ENCODE measurements at regions of chr2 and their contacts with region 1.

Region 1: DNA sequence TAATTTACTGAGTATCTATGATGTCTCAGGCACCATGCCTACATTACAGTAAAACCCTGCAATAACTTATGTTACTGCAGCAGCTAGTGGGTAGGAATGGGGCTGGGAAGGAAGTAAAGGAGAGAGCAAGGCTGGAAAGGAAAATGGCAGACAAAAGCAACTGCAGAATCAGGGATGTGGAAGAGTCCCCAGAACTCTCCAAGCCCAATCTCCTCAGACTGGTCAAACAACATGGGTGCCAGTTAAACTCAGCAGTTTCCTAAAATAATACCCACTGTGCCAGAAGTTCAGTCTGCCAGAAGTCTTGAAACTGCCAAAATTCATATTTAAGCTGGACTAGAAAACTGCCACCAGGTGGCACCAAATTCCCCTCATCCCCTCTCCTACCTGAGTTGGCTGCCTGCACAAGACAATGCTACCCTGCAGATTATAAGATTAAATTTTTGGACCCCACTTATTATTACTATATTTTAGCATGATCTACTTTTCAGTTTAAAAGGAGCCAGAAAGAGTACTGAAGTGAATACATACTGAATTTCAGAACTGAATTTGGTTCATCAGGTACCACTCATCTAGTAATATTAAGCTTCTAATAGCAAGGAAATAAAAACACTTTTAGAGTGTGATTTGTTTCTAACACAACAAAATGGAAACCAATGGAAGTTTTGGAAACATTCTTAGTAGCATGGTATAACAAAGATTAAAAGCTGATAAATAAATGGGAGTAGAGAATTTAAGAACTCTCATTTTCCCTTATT is 86.8 kb upstream of the DNER start:
- DNase-seq: peak; percentile 66
- H3K4me3 ChIP-seq: no peak overlapping the region
- H3K27ac ChIP-seq: no peak overlapping the region
- H3K4me1 ChIP-seq: no peaks in the 10 kb centered on the region
- H3K27me3 ChIP-seq: no peaks in the 10 kb centered on the region
- CTCF ChIP-seq: peak; percentile 42 to 71 (median 63)
- EP300 ChIP-seq: no peak
- POLR2A ChIP-seq: no peak

Region 2: DNA sequence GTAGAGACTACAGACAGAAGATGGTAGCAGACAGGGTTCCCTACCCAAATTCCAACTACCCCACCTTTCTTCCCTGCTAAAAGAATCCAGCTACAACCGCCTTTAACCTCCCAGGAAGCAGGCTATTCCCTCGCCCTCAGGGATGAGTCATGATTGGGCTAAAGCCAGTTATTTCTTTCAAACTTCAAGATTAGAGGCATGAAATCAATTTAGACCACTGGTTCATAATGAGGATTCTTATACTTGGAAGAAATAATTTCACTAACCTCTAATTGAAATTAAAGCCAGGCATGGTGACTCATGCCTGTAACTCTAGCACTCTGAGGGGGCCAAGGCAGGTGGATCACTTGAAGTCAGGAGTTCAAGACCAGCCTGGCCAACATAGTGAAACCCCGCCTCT is 100.6 kb after region 1 on chr2:
- in situ Hi-C with region 1: loop called in 1 of 4 experiments (anchors 10 kb)
- intact Hi-C with region 1: no loop called
- DNase-seq: no peak
- H3K4me3 ChIP-seq: no peak overlapping the region
- H3K27ac ChIP-seq: no peak overlapping the region
- H3K4me1 ChIP-seq: peaks cover 0 to 16% (median 0%) of the 10 kb centered on the region in 4 donors
- H3K27me3 ChIP-seq: no peaks in the 10 kb centered on the region
- CTCF ChIP-seq: no peak
- EP300 ChIP-seq: no peak
- POLR2A ChIP-seq: no peak

Measured in transverse colon (tissue), 4 donors.